ENCODE measurements at regions of chr4 and their contacts with region 1.

Region 1: GRCh38 chr4:139099366-139099982 is 77.5 kb downstream of the ELF2 start:
- DNase-seq: peak; percentile 61 to 62
- ATAC-seq: peak; percentile 86

Region 2: GRCh38 chr4:138816875-138817274 is 282.6 kb before region 1 on chr4:
- intact Hi-C with region 1: no loop called
- DNase-seq: no peak
- ATAC-seq: no peak

Region 3: DNA sequence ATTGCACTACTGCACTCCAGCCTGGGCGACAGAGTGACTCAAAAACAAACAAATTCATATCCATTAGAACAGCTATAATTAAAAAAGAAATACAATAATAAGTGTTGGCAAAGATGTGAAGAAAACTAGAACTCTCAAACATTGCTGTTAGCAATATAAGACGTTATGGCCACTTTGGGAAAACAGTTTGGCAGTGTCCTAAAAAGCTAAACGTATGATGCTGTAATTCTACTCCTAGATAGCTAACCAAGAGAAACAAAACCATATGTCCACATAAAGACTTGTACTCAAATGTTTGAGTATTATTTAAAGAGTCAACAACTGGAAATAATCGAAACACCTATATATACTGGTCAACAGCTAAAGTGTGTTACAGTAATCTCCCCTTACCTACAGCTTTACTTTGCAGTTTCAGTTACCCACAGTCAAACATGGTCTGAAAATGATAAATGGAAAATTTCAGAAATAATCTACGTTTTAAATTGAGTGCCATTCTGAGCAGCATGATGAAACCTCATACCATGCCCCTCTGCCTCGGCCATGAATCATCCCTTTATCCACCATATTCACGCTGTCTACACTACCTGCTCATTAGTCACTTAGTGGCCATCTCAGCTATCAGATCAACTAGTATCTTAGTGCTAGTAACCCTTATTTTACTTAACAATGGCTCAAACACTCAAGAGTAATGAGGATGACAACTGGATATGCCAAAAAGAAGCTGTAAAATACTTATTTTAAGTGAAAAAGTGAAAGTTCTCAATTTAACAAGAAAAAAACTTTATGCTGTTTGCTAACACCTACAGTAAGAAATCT is 72.6 kb after region 1 on chr4:
- intact Hi-C with region 1: loop called in 1 of 2 experiments (anchors 5 kb)
- DNase-seq: no peak
- ATAC-seq: no peak

Region 4: DNA sequence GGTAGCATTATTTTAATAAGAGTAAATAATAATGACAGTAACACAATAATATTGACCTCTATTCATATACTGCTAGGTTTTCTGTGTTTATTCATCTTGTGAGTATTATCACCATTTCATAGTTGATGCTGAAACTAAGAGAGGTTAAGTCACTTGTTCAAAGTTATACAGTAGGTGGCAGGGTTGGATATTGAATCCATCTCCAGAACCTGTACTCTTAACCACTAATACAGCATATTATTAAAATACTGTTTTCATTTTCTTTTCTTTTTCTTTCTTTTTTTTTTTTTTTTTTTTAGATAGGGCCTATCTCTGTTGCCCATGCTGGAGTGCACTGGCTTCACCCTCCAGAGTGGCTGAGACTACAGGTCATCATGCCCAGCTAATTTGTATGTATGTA is 84.7 kb after region 1 on chr4:
- intact Hi-C with region 1: no loop called
- DNase-seq: no peak
- ATAC-seq: no peak